MCF 10A (cell line): ENCODE measurements at regions of chr18 and their contacts with region 1.

Region 1: GRCh38 chr18:31957728-31958127 is 14.8 kb upstream of the TRAPPC8 start:
- DNase-seq: no peak
- H3K4me3 Mint-ChIP-seq: no peak overlapping the region
- H3K27ac Mint-ChIP-seq: no peak overlapping the region
- H3K4me1 Mint-ChIP-seq: peaks cover 5% of the 10 kb centered on the region
- H3K27me3 Mint-ChIP-seq: no peaks in the 10 kb centered on the region
- CTCF ChIP-seq: no peak

Region 2: DNA sequence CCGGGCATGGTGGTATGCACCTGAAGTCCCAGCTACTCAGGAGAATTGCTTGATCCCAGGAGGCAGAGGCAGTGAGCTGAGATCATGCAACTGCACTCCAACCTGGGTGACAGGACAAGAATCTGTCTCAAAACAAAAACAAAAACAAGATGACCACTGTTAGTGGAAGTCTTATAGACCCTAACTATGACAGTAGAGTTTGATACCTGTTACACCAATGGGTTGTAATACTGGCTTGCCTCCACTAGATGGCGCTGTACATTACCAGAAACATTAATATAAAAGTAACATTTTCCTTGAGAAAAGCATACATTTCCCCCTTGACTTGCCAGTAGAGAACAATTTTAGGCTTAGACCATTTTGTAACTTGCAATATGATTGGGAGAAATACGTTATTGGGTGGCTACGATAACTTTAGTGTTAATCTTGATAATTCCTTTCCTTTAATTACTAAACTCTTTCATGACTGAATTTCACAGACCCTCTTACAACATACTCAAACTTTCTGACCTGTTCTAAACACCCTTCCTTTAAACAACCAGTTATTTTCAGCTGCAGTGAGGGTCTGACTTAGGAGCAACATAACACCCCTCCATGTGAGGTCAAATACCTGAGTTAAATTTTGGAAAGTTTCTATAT is 216.5 kb before region 1 on chr18:
- CTCF ChIA-PET with region 1: no interaction called
- POLR2A ChIA-PET with region 1: no interaction called
- intact Hi-C with region 1: loop called (anchors 2 kb)
- DNase-seq: peak; percentile 59
- H3K4me3 Mint-ChIP-seq: no peak overlapping the region
- H3K27ac Mint-ChIP-seq: no peak overlapping the region
- H3K4me1 Mint-ChIP-seq: no peaks in the 10 kb centered on the region
- H3K27me3 Mint-ChIP-seq: no peaks in the 10 kb centered on the region
- CTCF ChIP-seq: peak; percentile 81

Region 3: DNA sequence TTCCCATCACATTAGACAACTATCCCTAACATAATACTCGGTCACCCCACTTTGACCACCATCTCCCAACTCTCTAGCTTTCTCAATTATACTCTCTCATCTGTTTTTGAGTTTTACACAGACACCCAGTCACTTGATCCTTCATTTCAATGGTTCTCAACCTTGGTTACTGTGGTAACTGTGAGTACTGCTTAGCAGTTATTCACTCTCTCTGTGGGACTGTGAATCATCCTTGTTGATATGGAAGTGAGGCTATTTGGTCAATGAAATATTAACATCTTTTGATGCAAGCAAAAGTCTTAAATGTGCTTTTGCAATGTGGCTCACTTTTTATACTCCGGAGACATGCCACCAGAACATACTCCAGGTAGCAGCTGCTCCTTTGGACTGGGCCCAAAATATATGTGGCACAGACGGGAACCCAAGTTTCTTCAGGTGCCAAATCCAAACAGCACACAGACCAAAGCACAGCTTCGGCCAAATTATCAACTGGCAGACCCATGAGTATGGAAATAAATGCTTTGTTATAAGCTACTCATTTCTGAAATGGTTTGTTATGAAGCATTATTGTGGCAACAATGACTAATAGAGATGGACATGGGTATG is 122.1 kb before region 1 on chr18:
- CTCF ChIA-PET with region 1: no interaction called
- POLR2A ChIA-PET with region 1: no interaction called
- intact Hi-C with region 1: no loop called
- DNase-seq: no peak
- H3K4me3 Mint-ChIP-seq: no peak overlapping the region
- H3K27ac Mint-ChIP-seq: no peak overlapping the region
- H3K4me1 Mint-ChIP-seq: no peaks in the 10 kb centered on the region
- H3K27me3 Mint-ChIP-seq: no peaks in the 10 kb centered on the region
- CTCF ChIP-seq: no peak